Naive thymus-derived CD8-positive, alpha-beta T cell (primary cell): ENCODE measurements at regions of chr22 and their contacts with region 1.

Region 1: GRCh38 chr22:41832553-41833368 is at the start of gene SREBF2:
- DNase-seq: peak; percentile 93 to 99 (median 98)
- ATAC-seq: peak; percentile 92 to 94
- H3K4me3 Mint-ChIP-seq: peak within 1 kb of the TSS; percentile 91 to 98 (median 95)
- H3K27ac Mint-ChIP-seq: peak within 1 kb of the TSS; percentile 94 to 100 (median 99)
- H3K4me1 Mint-ChIP-seq: peaks cover 22 to 38% (median 26%) of the 10 kb centered on the region in 4 donors
- H3K27me3 Mint-ChIP-seq: no peaks in the 10 kb centered on the region
- polyA plus RNA-seq, gene SREBF2: 16.3 to 21.9 (median 18.2) TPM

Region 2: GRCh38 chr22:41697126-41697775 is 135.5 kb before region 1 on chr22:
- POLR2A ChIA-PET with region 1: interaction called, 10 read pairs
- DNase-seq: peak; percentile 70 to 95 (median 85)
- ATAC-seq: peak; percentile 72 to 79
- H3K4me3 Mint-ChIP-seq: peak overlapping the region; percentile 40 to 84 (median 74)
- H3K27ac Mint-ChIP-seq: peak overlapping the region in 9 of 10 donors; percentile 61 to 93 (median 81)
- H3K4me1 Mint-ChIP-seq: peaks cover 11 to 13% (median 12%) of the 10 kb centered on the region in 4 donors
- H3K27me3 Mint-ChIP-seq: peaks cover 0 to 2% (median 0%) of the 10 kb centered on the region in 5 donors

Region 3: DNA sequence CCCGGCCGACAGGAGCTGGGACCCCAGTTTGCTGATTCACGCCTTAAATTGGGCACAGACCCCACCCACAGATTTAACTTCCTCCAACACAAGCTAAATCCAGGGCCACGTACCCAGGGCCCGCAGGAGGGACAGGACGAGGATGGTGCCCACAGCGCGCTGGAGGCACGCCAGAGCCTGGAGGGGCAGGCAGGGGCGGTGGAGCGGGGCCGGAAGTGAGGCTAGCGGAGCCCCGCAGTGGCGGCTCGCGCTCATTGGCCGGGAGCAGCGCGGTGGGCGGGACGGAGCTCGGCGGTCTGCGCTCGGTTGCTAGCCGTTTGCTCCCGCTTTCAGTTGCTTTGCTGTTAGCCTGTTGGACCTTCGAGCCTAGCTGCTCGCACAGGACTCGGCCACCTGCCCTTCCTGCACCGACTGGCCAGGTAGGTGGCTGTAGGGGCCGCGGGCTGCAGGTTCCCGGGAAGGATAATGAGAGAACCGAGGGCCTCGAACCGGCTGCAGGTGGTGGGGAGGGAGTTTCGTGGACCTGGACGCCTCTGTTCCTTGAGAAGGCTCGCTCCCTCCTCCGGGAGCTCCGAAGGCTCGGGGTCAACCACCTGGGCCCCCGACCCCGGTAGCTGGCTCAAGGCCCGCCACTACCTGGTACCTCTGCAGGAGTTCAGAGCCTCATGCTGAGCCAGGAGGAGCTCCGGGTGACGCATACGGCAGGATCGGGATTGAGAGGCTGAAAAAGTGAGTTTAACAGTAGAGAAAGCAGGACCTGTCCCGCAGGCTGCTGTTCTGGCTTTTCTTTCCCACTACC is 32.2 kb before region 1 on chr22 and contains the start of gene CCDC134:
- POLR2A ChIA-PET with region 1: interaction called, 48 read pairs
- DNase-seq: peak; percentile 84 to 95 (median 90)
- ATAC-seq: peak; percentile 94 to 98
- H3K4me3 Mint-ChIP-seq: peak within 1 kb of the TSS; percentile 88 to 99 (median 96)
- H3K27ac Mint-ChIP-seq: peak within 1 kb of the TSS; percentile 95 to 100 (median 99)
- H3K4me1 Mint-ChIP-seq: peaks cover 16 to 54% (median 40%) of the 10 kb centered on the region in 4 donors
- H3K27me3 Mint-ChIP-seq: no peaks in the 10 kb centered on the region
- polyA plus RNA-seq, gene CCDC134: 3.5 to 5.6 (median 3.8) TPM

Region 4: DNA sequence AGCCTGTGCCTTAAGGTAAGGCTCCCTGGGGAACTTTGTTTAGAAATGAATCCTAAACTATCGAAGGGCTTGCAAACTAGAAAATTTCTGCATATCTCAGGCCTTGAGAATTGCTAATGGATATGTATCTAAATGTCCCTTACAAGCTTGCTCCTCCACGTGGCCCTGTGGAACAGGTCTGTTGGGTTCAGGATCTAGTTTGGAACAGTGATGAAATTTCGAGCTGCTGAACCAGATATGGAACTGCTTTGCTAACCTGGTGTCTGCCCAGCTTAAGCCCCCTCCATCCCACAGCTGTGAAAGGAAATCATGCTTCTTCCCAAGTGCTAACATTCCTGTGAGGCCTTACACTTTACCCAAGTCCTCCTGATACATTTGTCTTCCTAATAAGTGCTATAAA is 11.8 kb after region 1 on chr22:
- POLR2A ChIA-PET with region 1: interaction called, 13 read pairs
- DNase-seq: peak in 1 of 10 donors; percentile 13
- ATAC-seq: no peak
- H3K4me3 Mint-ChIP-seq: no peak overlapping the region
- H3K27ac Mint-ChIP-seq: peak overlapping the region in 1 of 10 donors; percentile 1
- H3K4me1 Mint-ChIP-seq: peaks cover 21 to 72% (median 53%) of the 10 kb centered on the region in 4 donors
- H3K27me3 Mint-ChIP-seq: no peaks in the 10 kb centered on the region

Region 5: GRCh38 chr22:41862160-41862529 is 29.4 kb after region 1 on chr22:
- POLR2A ChIA-PET with region 1: interaction called, 14 read pairs
- DNase-seq: peak in 8 of 10 donors; percentile 20 to 72 (median 44)
- ATAC-seq: peak; percentile 73 to 77
- H3K4me3 Mint-ChIP-seq: peak overlapping the region; percentile 25 to 74 (median 59)
- H3K27ac Mint-ChIP-seq: peak overlapping the region; percentile 77 to 94 (median 90)
- H3K4me1 Mint-ChIP-seq: peaks cover 17 to 81% (median 58%) of the 10 kb centered on the region in 4 donors
- H3K27me3 Mint-ChIP-seq: no peaks in the 10 kb centered on the region

Region 6: DNA sequence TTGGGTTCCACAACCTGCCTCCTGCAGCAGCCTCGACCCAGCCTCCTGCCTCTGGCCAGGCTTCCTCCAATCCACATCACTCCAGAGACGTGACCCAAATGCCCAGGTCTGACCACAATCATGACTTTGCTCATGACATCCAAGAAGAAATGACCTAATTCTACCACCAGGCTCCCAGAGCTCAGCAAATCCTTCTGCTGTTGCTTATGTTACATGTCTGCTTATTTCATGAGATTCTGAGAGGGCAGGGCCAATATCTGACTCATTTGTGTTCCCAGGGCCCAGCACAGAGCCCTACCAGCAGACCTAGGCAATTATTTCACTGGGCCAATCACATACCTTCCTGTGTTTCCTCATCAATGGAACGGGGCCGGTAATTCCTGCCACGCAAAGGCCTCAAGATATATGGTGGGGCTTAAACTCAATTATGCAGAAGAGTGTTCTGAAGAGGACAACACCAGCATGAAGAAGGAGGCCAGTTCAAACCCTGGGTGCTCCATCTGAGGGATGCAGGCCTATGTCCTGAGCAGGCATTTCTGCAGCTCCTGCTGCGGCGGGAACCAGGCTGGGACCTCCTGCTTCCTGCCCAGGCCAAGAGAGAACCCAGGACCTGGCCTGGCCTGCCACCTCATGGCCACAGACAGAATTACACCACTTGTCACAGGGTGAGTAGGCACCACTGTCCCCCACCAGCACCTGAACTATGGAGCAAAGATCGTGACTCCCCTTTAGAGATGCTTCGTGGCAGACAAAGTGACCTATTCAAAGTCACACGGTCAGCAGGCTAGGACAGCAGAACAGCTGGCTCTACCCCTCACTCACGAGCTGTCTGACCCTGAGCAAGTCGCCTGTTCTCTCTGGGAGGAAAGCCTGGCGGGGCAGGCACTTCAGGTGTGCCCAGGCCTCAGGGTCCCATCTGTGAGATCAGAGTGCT is 108.3 kb after region 1 on chr22:
- POLR2A ChIA-PET with region 1: interaction called, 23 read pairs
- DNase-seq: peak; percentile 76 to 93 (median 85)
- ATAC-seq: peak; percentile 63
- H3K4me3 Mint-ChIP-seq: peak overlapping the region; percentile 43 to 92 (median 76)
- H3K27ac Mint-ChIP-seq: peak overlapping the region; percentile 97 to 100 (median 100)
- H3K4me1 Mint-ChIP-seq: peaks cover 17 to 55% (median 33%) of the 10 kb centered on the region in 4 donors
- H3K27me3 Mint-ChIP-seq: no peaks in the 10 kb centered on the region